CD4-positive, alpha-beta memory T cell (primary cell): ENCODE measurements at regions of chr22 and their contacts with region 1.

Region 1: GRCh38 chr22:19891317-19892256 is 36.9 kb upstream of the GNB1L start:
- DNase-seq: peak; percentile 76 to 94 (median 80)
- H3K4me3 ChIP-seq: peak overlapping the region; percentile 8 to 46
- H3K4me3 Mint-ChIP-seq: peak overlapping the region; percentile 79 to 93 (median 86)
- H3K27ac ChIP-seq: peak overlapping the region; percentile 59
- H3K27ac Mint-ChIP-seq: peak overlapping the region; percentile 74 to 99 (median 96)
- H3K4me1 ChIP-seq: peaks cover 75% of the 10 kb centered on the region
- H3K4me1 Mint-ChIP-seq: peaks cover 33 to 85% (median 52%) of the 10 kb centered on the region in 4 donors
- H3K27me3 ChIP-seq: no peaks in the 10 kb centered on the region
- H3K27me3 Mint-ChIP-seq: no peaks in the 10 kb centered on the region

Region 2: GRCh38 chr22:19756288-19757128 is 135.1 kb before region 1 on chr22:
- CTCF ChIA-PET with region 1: interaction called, 9 read pairs
- POLR2A ChIA-PET with region 1: interaction called, 6 read pairs
- intact Hi-C with region 1: loop called (anchors 5 kb)
- DNase-seq: peak; percentile 61 to 70 (median 66)
- H3K4me3 ChIP-seq: peak overlapping the region in 1 of 2 donors; percentile 47
- H3K4me3 Mint-ChIP-seq: peak overlapping the region; percentile 55 to 83 (median 70)
- H3K27ac ChIP-seq: no peak overlapping the region
- H3K27ac Mint-ChIP-seq: no peak overlapping the region
- H3K4me1 ChIP-seq: peaks cover 33% of the 10 kb centered on the region
- H3K4me1 Mint-ChIP-seq: peaks cover 19 to 39% (median 27%) of the 10 kb centered on the region in 4 donors
- H3K27me3 ChIP-seq: peaks cover 22% of the 10 kb centered on the region
- H3K27me3 Mint-ChIP-seq: peaks cover 37 to 38% of the 10 kb centered on the region in 2 donors

Region 3: GRCh38 chr22:19874307-19875060 is 17.1 kb before region 1 on chr22:
- CTCF ChIA-PET with region 1: no interaction called
- POLR2A ChIA-PET with region 1: interaction called, 17 read pairs
- intact Hi-C with region 1: loop called (anchors 1 kb)
- DNase-seq: peak in 4 of 5 donors; percentile 24 to 49 (median 40)
- H3K4me3 ChIP-seq: peak overlapping the region in 1 of 2 donors; percentile 4
- H3K4me3 Mint-ChIP-seq: peak overlapping the region in 7 of 8 donors; percentile 15 to 67 (median 36)
- H3K27ac ChIP-seq: peak overlapping the region; percentile 10
- H3K27ac Mint-ChIP-seq: peak overlapping the region in 5 of 7 donors; percentile 50 to 85 (median 71)
- H3K4me1 ChIP-seq: peaks cover 18% of the 10 kb centered on the region
- H3K4me1 Mint-ChIP-seq: peaks cover 3 to 12% (median 9%) of the 10 kb centered on the region in 4 donors
- H3K27me3 ChIP-seq: no peaks in the 10 kb centered on the region
- H3K27me3 Mint-ChIP-seq: no peaks in the 10 kb centered on the region

Region 4: DNA sequence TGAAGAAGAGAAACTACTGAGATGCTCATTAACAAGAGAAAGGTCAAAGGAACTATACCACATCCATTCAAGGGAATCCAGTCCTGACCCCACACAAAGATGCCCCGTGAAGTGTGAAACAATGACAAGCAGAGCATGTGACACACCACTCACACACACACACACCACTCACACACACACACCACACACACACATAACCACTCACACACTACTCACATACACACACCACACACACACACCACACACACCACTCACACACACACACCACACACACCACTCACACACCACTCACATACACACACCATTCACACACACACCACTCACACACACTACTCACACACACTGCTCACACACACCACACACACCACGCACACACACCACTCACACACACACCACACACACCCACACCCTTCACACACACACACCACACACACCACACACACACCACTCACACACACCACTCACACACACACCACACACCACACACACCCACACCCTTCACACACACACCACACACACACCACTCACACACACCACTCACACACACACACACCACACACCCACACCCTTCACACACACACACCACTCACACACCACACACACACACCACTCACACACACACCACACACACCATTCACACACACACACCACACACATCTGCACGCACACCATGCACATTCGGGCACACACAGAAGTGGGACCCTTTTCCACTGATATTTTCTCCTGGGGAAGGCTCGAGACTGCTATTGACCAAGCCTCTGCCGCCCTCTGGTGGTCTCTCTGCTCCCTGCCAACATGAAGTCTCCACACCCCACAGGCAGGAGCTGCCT is 18.0 kb after region 1 on chr22:
- CTCF ChIA-PET with region 1: interaction called, 11 read pairs
- POLR2A ChIA-PET with region 1: interaction called, 6 read pairs
- intact Hi-C with region 1: loop called (anchors 2 kb)
- DNase-seq: peak; percentile 73 to 77 (median 76)
- H3K4me3 ChIP-seq: no peak overlapping the region
- H3K4me3 Mint-ChIP-seq: peak overlapping the region in 2 of 8 donors; percentile 13 to 53
- H3K27ac ChIP-seq: no peak overlapping the region
- H3K27ac Mint-ChIP-seq: peak overlapping the region in 6 of 7 donors; percentile 22 to 92 (median 71)
- H3K4me1 ChIP-seq: peaks cover 7% of the 10 kb centered on the region
- H3K4me1 Mint-ChIP-seq: peaks cover 2 to 6% (median 5%) of the 10 kb centered on the region in 4 donors
- H3K27me3 ChIP-seq: no peaks in the 10 kb centered on the region
- H3K27me3 Mint-ChIP-seq: no peaks in the 10 kb centered on the region